ENCODE measurements at regions of chr3 and their contacts with region 1.

Region 1: DNA sequence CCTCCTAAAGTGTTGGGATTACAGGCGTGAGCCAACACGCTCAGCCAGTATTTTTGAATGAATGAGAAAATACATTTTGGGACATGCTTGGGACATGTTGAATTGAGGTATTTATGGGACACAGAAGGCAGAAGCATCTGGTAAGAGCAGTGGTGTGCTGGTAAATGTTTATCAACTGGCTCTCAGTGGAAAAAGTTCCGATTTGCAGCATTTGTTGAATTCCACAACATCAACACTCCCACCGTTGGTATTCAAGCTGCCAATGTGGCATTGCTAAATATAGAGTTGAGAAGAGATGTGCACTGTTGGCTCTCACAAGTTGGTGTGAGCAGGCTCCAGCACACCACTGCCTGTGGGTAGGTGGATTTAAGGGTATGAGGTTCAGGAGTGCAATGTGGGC is 35.8 kb upstream of the LRRFIP2 start:
- DNase-seq: no peak
- ATAC-seq: peak; percentile 53 to 70 (median 62)
- H3K4me3 ChIP-seq: no peak overlapping the region
- H3K27ac ChIP-seq: peak overlapping the region in 3 of 12 donors; percentile 25 to 49 (median 34)
- H3K4me1 ChIP-seq: peaks cover 0 to 7% (median 0%) of the 10 kb centered on the region in 12 donors
- H3K27me3 ChIP-seq: no peaks in the 10 kb centered on the region
- CTCF ChIP-seq: no peak
- POLR2A ChIP-seq: no peak

Region 2: GRCh38 chr3:36729204-36730056 is 480.8 kb before region 1 on chr3:
- intact Hi-C with region 1: loop called in 1 of 10 experiments (anchors 10 kb)
- DNase-seq: no peak
- ATAC-seq: peak in 2 of 4 donors; percentile 61 to 80
- H3K4me3 ChIP-seq: no peak overlapping the region
- H3K27ac ChIP-seq: no peak overlapping the region
- H3K4me1 ChIP-seq: peaks cover 0 to 19% (median 7%) of the 10 kb centered on the region in 12 donors
- H3K27me3 ChIP-seq: no peaks in the 10 kb centered on the region
- CTCF ChIP-seq: peak; percentile 61 to 86 (median 79)
- POLR2A ChIP-seq: no peak

Region 3: DNA sequence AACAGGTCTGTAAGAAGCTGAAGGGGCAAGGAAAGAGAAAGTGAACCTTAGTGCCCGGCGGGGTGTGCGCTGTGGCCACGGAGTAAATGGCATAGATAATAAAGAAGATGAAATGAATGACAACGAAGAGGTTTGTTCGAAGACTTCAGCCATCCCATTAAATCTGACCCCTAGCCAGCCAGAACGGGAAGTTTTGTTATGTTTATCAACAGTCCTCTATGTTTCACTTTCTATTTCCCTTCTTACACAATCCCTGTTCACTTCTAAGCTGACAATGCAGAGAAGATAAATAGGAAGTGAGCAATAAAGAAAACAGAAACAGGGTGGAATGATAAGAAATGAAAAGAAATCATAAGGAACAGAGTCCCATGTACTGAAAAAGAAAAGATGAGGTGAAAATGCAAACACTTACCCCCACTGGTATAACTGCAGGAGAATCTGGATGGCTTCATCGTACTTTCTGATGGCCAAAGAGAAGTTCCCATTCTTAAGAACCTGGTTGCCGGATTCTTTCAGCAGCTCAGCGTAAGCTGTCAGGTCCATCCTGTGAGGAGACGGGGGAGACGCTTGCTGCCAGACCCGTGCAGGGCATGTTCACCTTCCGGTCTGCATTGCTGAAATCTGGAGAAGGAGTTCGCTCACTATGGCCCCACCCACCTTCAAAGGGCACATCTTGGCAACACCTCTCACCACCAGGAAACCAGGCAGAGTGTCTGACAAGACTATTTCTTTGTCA is 302.2 kb before region 1 on chr3:
- intact Hi-C with region 1: loop called in 4 of 10 experiments (anchors 5 to 10 kb)
- DNase-seq: peak; percentile 37 to 67 (median 51)
- ATAC-seq: peak; percentile 54 to 82 (median 76)
- H3K4me3 ChIP-seq: peak overlapping the region; percentile 12 to 74 (median 57)
- H3K27ac ChIP-seq: peak overlapping the region; percentile 0 to 95 (median 72)
- H3K4me1 ChIP-seq: peaks cover 0 to 62% (median 8%) of the 10 kb centered on the region in 12 donors
- H3K27me3 ChIP-seq: no peaks in the 10 kb centered on the region
- CTCF ChIP-seq: no peak
- POLR2A ChIP-seq: no peak

Region 4: GRCh38 chr3:36993326-36994283 is 216.6 kb before region 1 on chr3 and contains the start of gene MLH1:
- intact Hi-C with region 1: loop called in 1 of 10 experiments (anchors 10 kb)
- DNase-seq: peak; percentile 94 to 97 (median 95)
- ATAC-seq: peak; percentile 94 to 97 (median 96)
- H3K4me3 ChIP-seq: peak within 1 kb of the TSS; percentile 57 to 83 (median 70)
- H3K27ac ChIP-seq: peak within 1 kb of the TSS; percentile 93 to 99 (median 98)
- H3K4me1 ChIP-seq: peaks cover 7 to 65% (median 48%) of the 10 kb centered on the region in 12 donors
- H3K27me3 ChIP-seq: no peaks in the 10 kb centered on the region
- CTCF ChIP-seq: no peak
- POLR2A ChIP-seq: peak in 1 of 2 donors; percentile 64
- total RNA-seq, gene MLH1: 44.5 to 58.4 (median 50.4) TPM

Region 5: DNA sequence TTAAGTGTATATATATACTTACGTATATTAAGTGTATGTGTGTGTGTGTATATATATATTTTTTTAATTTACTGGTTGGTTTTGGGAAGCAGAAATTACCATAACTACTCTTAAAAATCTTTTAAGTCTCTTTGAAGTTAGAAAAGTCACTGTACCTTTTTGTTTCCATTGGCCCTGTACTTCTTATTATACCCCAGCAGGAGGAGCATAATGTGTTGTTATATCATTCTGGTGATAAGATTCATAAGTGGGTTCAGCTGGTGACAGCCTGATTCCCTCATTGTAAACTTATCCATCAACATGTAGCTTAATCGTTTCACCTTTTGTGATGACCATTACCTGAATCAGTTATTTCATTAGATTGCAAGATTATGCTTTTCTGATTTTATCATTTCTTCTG is 186.1 kb before region 1 on chr3:
- intact Hi-C with region 1: loop called (anchors 1 to 5 kb)
- DNase-seq: no peak
- ATAC-seq: no peak
- H3K4me3 ChIP-seq: no peak overlapping the region
- H3K27ac ChIP-seq: peak overlapping the region in 2 of 12 donors; percentile 56 to 81
- H3K4me1 ChIP-seq: peaks cover 0 to 40% (median 26%) of the 10 kb centered on the region in 12 donors
- H3K27me3 ChIP-seq: no peaks in the 10 kb centered on the region
- CTCF ChIP-seq: peak; percentile 24 to 61 (median 46)
- POLR2A ChIP-seq: no peak

Region 6: GRCh38 chr3:37096288-37096687 is 113.9 kb before region 1 on chr3:
- intact Hi-C with region 1: loop called in 2 of 10 experiments (anchors 10 kb)
- DNase-seq: no peak
- ATAC-seq: peak in 2 of 4 donors; percentile 30 to 54
- H3K4me3 ChIP-seq: no peak overlapping the region
- H3K27ac ChIP-seq: peak overlapping the region in 10 of 12 donors; percentile 27 to 64 (median 32)
- H3K4me1 ChIP-seq: peaks cover 0 to 37% (median 19%) of the 10 kb centered on the region in 12 donors
- H3K27me3 ChIP-seq: no peaks in the 10 kb centered on the region
- CTCF ChIP-seq: no peak
- POLR2A ChIP-seq: no peak

Measured in heart left ventricle (tissue), 16 donors.